ENCODE measurements at regions of chr1 and their contacts with region 1.

Region 1: GRCh38 chr1:118254521-118255425 is 69.7 kb upstream of the SPAG17 start:
- DNase-seq: no peak
- H3K4me3 ChIP-seq: no peak overlapping the region
- CTCF ChIP-seq: no peak
- POLR2A ChIP-seq: no peak

Region 2: GRCh38 chr1:116919802-116920201 is 1335.0 kb before region 1 on chr1:
- intact Hi-C with region 1: loop called (anchors 5 kb)
- DNase-seq: no peak
- H3K4me3 ChIP-seq: no peak overlapping the region
- CTCF ChIP-seq: no peak
- POLR2A ChIP-seq: no peak

Measured in lower leg skin (tissue), 4 donors.